CD4-positive, alpha-beta T cell (primary cell): ENCODE measurements at regions of chr5 and their contacts with region 1.

Region 1: DNA sequence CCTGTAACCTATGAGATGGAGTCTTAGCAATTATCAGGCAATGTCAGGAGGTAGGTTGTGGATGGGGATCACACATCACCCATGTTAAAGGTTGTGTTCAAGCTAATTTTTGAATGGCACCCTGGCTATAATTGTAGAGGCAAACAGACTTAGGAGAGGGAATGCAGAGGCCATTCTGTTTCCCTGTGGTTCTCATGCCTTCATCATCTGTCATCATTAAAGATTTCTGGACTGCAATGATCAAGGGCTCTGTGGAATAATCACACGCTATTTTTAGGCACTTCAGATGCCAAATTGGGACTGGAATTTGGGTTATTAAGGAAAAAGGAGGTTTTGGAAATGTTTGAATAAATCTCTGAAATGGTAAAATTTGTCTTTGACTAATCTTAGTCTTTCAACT is 1065.4 kb downstream of the TAF11L14 start:
- DNase-seq: no peak
- ATAC-seq: no peak
- H3K4me3 ChIP-seq: no peak overlapping the region
- H3K4me3 Mint-ChIP-seq: no peak overlapping the region
- H3K27ac ChIP-seq: no peak overlapping the region
- H3K27ac Mint-ChIP-seq: no peak overlapping the region
- H3K4me1 ChIP-seq: peaks cover 7% of the 10 kb centered on the region
- H3K4me1 Mint-ChIP-seq: peaks cover 13% of the 10 kb centered on the region
- H3K27me3 ChIP-seq: no peaks in the 10 kb centered on the region
- H3K27me3 Mint-ChIP-seq: no peaks in the 10 kb centered on the region
- CTCF ChIP-seq: no peak

Region 2: GRCh38 chr5:17216176-17216973 is 1483.3 kb before region 1 on chr5:
- CTCF ChIA-PET with region 1: no interaction called
- POLR2A ChIA-PET with region 1: no interaction called
- intact Hi-C with region 1: loop called in 1 of 2 experiments (anchors 5 kb)
- DNase-seq: peak in 10 of 14 experiments; percentile 9 to 65 (median 38)
- ATAC-seq: peak; percentile 32
- H3K4me3 ChIP-seq: peak overlapping the region; percentile 19
- H3K4me3 Mint-ChIP-seq: peak overlapping the region; percentile 66
- H3K27ac ChIP-seq: no peak overlapping the region
- H3K27ac Mint-ChIP-seq: peak overlapping the region; percentile 9
- H3K4me1 ChIP-seq: peaks cover 24% of the 10 kb centered on the region
- H3K4me1 Mint-ChIP-seq: peaks cover 21% of the 10 kb centered on the region
- H3K27me3 ChIP-seq: peaks cover 25 to 37% of the 10 kb centered on the region in 2 experiments
- H3K27me3 Mint-ChIP-seq: peaks cover 40% of the 10 kb centered on the region
- CTCF ChIP-seq: peak; percentile 56

Region 3: GRCh38 chr5:18393589-18394442 is 305.9 kb before region 1 on chr5:
- CTCF ChIA-PET with region 1: no interaction called
- POLR2A ChIA-PET with region 1: no interaction called
- intact Hi-C with region 1: loop called in 1 of 2 experiments (anchors 10 kb)
- DNase-seq: peak in 12 of 14 experiments; percentile 1 to 35 (median 10)
- ATAC-seq: no peak
- H3K4me3 ChIP-seq: no peak overlapping the region
- H3K4me3 Mint-ChIP-seq: no peak overlapping the region
- H3K27ac ChIP-seq: no peak overlapping the region
- H3K27ac Mint-ChIP-seq: no peak overlapping the region
- H3K4me1 ChIP-seq: no peaks in the 10 kb centered on the region
- H3K4me1 Mint-ChIP-seq: no peaks in the 10 kb centered on the region
- H3K27me3 ChIP-seq: no peaks in the 10 kb centered on the region
- H3K27me3 Mint-ChIP-seq: no peaks in the 10 kb centered on the region
- CTCF ChIP-seq: peak; percentile 42